Vagina (tissue), 2 donors: ENCODE measurements at regions of chr20 and their contacts with region 1.

Region 1: GRCh38 chr20:56875046-56875551 is 246.0 kb downstream of the TFAP2C start:
- DNase-seq: no peak
- H3K4me3 ChIP-seq: no peak overlapping the region
- H3K27ac ChIP-seq: no peak overlapping the region
- H3K4me1 ChIP-seq: peaks cover 12% of the 10 kb centered on the region
- H3K27me3 ChIP-seq: no peaks in the 10 kb centered on the region
- CTCF ChIP-seq: no peak
- POLR2A ChIP-seq: no peak

Region 2: DNA sequence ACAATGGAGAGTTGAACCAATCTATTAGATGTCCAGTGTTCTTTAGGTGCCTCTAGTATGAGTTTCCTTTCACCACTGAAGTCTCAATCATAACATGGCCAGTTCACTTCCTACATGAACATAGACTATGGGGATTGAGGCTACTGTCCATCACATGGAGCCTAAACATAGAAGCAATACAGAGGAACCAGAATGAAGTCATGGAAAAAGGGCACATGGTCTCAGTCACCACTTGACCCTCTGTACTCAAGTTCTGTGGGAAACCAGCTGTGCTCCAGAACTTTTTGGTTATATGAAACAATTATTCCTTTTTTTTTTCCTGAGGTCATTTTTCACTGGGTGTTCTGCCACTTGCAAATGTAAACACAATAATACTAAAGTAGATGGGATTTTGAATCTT is 1632.2 kb before region 1 on chr20:
- intact Hi-C with region 1: loop called (anchors 5 kb)
- DNase-seq: no peak
- H3K4me3 ChIP-seq: no peak overlapping the region
- H3K27ac ChIP-seq: no peak overlapping the region
- H3K4me1 ChIP-seq: no peaks in the 10 kb centered on the region
- H3K27me3 ChIP-seq: no peaks in the 10 kb centered on the region
- CTCF ChIP-seq: no peak
- POLR2A ChIP-seq: no peak

Region 3: GRCh38 chr20:56736285-56736857 is 138.7 kb before region 1 on chr20:
- intact Hi-C with region 1: no loop called
- DNase-seq: no peak
- H3K4me3 ChIP-seq: no peak overlapping the region
- H3K27ac ChIP-seq: no peak overlapping the region
- H3K4me1 ChIP-seq: peaks cover 3% of the 10 kb centered on the region
- H3K27me3 ChIP-seq: no peaks in the 10 kb centered on the region
- CTCF ChIP-seq: no peak
- POLR2A ChIP-seq: no peak

Region 4: DNA sequence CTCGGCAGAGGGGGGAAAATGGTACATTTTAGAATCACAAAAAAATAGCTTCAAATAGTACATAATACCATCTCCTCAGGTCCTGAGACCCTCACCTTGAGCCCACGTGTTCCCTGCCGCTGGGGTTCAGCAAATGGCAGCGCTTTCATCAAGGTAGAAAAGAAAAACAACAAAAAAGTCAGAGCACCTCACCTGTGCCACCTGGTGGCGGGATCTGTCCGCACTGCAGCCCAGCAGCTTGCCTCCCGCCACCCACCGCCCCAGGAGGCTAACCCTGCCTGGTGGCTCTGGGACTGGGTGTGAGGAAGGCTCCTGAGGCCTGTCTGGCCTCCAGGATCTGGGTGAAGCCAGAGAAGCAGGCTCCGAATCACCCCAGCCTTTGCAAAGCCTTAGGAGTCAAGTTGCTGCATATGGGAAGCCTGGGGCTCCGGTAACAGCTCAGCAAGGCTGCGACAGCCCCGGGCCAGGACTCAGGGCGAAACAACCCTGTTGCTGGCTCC is 120.5 kb after region 1 on chr20:
- intact Hi-C with region 1: no loop called
- DNase-seq: no peak
- H3K4me3 ChIP-seq: no peak overlapping the region
- H3K27ac ChIP-seq: no peak overlapping the region
- H3K4me1 ChIP-seq: peaks cover 4% of the 10 kb centered on the region
- H3K27me3 ChIP-seq: no peaks in the 10 kb centered on the region
- CTCF ChIP-seq: peak in 1 of 3 experiments; percentile 14
- POLR2A ChIP-seq: no peak